ENCODE measurements at regions of chr18 and their contacts with region 1.

Region 1: DNA sequence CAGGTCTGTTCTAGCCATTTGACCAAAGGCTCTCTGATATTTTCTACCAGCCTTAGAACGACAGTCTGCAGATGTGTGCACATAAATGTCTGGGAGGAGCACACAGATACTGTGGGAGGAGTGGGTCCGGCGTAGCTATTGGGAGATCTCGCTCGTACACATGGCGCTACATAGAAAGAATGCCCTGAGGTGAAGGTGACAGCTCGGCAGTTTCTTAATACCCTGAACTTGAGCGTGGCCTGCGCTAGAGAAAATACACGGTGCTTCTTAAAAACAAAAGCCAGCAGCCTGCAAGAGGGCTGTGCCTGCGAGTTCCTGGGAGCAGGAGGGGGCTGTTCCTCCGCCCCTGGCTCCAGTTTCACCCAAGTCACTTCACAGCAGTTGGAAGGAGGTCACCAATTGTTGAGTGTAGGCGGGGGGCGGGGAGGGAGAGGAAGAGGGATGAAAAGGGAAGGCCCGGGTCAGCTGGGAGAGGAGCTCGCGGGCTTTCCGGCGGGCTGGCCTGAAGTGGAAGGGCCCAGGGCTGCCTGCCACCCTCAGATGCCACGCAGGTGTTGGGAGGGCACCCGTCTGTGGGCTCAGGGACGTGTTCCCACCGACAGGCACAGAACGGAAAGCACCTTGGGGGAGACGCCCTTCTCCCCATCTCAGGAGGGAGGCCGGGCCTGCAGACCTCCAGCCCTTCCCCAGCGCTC is 124.7 kb upstream of the ZNF516 start:
- DNase-seq: peak in 5 of 10 donors; percentile 24 to 45 (median 36)
- H3K4me3 ChIP-seq: peak overlapping the region in 58 of 59 donors; percentile 4 to 65 (median 43)
- H3K27ac ChIP-seq: peak overlapping the region in 55 of 59 donors; percentile 5 to 85 (median 68)
- H3K27me3 ChIP-seq: peaks cover 0 to 8% (median 0%) of the 10 kb centered on the region in 45 donors
- CTCF ChIP-seq: no peak

Region 2: DNA sequence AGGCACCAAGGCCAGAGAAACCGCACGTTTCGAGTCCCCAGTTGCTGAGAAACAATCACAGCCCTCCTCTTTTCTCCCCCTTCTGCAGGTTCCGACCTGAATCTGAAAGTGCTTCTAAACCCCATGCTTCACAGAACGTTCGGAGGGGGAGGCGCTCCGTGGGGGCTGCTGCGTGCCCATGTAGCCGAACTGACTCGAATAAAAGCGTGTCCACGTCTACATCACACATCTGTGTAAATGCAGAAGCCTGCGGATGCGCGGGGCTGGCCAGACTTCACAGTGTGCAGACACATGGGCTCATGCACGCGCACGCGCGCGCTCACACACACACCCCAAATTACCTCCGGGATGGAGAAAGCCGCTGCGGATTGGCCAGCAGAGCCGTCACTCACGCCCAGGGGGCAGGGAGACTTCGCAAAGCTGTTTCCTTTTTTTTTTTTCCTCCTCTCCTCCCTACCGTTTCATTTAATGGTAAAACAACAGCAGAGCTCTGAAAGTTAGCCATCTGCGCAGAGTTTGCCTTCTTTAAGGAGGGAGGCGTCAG is 127.0 kb before region 1 on chr18:
- intact Hi-C with region 1: loop called in 1 of 2 experiments (anchors 10 kb)
- DNase-seq: peak; percentile 81 to 98 (median 96)
- H3K4me3 ChIP-seq: peak overlapping the region; percentile 46 to 81 (median 68)
- H3K27ac ChIP-seq: peak overlapping the region in 55 of 59 donors; percentile 3 to 91 (median 76)
- H3K27me3 ChIP-seq: peaks cover 0 to 61% (median 7%) of the 10 kb centered on the region in 45 donors
- CTCF ChIP-seq: no peak